Posterior cingulate gyrus (tissue), 11 donors: ENCODE measurements at regions of chr19 and their contacts with region 1.

Region 1: GRCh38 chr19:50496189-50497021 is 14.6 kb downstream of the JOSD2 start:
- DNase-seq: peak; percentile 83 to 99 (median 90)

Region 2: GRCh38 chr19:50547385-50548190 is 51.2 kb after region 1 on chr19:
- intact Hi-C with region 1: loop called (anchors 10 kb)
- DNase-seq: peak in 3 of 10 donors; percentile 47 to 78 (median 55)